ENCODE measurements at regions of chr14 and their contacts with region 1.

Region 1: DNA sequence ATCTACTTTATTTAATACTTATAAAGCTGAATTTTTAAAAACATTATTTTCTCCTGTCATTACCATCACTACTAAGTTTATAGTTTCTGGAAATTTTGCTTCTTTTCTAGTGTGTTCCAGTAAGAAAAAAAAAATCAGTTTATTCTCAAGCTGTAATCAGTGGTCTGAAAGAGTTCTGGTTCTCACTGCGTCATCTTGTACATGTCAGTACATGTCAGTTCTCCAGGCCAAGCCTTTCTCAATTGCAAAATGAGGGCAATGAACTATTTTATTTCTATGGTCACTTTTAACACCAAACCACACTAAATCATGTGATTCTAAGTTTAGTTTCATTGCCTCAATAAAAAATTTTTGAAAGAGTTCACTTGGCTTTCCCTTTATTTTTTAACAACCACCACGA is 468.9 kb upstream of the LRFN5 start:
- DNase-seq: no peak
- ATAC-seq: no peak

Region 2: DNA sequence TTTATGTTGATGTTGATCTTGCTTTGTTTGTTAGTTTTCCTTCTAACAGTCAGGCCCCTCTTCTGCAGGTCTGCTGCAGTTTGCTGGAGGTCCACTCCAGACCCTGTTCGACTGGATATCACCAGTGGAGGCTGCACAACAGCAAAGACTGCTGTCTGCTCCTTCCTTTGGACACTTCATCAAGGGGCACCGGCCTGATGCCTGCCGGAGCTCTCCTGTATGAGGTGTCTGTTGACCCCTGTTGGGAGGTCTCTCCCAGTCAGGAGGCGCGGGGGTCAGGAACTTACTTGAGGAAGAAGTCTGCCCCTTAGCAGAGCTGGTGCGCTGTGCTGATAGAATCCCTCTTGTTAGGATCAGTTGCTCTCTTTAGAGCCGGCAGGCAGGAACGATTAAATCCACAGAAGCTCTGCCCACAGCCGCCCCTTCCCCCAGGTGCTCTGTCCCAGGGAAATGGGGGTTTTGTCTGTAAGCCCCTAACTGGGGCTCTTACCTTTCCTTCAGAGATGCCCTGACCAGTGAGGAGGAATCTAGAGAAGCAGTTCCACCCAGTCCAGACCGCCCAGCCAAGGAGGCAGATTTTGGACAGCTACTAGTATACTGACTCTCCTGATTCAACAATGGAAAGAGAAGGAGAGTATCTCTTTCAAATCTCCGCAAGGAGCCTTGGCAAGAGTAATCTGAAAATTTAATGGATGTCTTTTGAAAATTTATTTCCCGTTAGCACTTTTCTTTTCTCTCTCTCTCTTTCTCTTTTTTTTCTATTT is 1878.8 kb before region 1 on chr14:
- intact Hi-C with region 1: no loop called
- DNase-seq: no peak
- ATAC-seq: no peak

Region 3: DNA sequence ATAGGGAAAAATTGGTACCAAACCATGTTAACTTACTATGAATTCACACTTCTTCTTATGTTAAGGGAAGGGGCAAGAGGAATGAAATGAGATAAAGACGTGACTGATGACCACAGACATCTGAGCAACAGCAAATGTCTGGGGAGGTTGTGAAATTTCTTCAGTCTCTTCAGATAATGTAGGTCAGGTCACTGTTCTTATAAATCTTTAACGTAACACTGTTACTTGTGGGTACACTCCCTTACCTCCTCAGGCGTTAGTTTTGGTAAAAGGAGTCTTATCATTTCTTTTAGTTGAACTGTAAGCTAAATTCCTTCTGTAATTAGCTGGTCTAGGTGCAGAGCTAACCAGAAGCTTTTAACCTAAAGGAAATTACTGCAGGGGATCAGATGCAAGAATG is 64.0 kb after region 1 on chr14:
- intact Hi-C with region 1: loop called in 1 of 2 experiments (anchors 2 kb)
- DNase-seq: no peak
- ATAC-seq: no peak

Region 4: GRCh38 chr14:42455544-42455943 is 1317.8 kb after region 1 on chr14:
- intact Hi-C with region 1: no loop called
- DNase-seq: no peak
- ATAC-seq: no peak

Measured in left cardiac atrium (tissue), 4 donors.